Activated CD4-positive, alpha-beta T cell treated with anti-CD3 and anti-CD28 coated beads for 36 hours (primary cell): ENCODE measurements at regions of chr5 and their contacts with region 1.

Region 1: DNA sequence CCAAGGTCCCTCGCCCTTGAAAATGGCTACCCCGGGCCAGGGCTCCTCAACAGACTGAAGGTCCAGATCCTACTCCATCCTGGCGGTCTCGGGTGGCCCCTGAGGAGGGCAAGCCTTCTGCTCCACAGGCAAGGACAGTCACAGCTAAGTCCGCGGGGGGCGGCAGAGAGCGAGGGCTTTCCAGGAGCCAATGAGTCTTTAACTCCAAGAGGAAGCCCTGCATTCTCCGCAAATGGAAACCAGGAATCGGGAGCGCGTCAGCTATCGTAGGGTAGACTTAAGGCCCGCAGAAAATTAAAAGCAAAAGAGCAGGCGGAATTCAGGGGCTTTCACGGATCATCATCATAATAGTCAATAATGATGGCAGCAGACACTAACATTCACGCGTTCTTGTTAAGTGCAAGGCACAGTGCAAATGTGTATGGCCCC is 87.8 kb upstream of the TNFAIP8 start:
- DNase-seq: peak; percentile 93
- ATAC-seq: peak; percentile 75
- H3K4me3 Mint-ChIP-seq: peak overlapping the region; percentile 96
- H3K27ac Mint-ChIP-seq: peak overlapping the region; percentile 96
- H3K4me1 Mint-ChIP-seq: peaks cover 63% of the 10 kb centered on the region
- H3K27me3 Mint-ChIP-seq: no peaks in the 10 kb centered on the region

Region 2: GRCh38 chr5:119022017-119022745 is 245.8 kb before region 1 on chr5:
- CTCF ChIA-PET with region 1: interaction called, 4 read pairs
- POLR2A ChIA-PET with region 1: no interaction called
- intact Hi-C with region 1: loop called in 1 of 2 experiments (anchors 2 kb)
- DNase-seq: no peak
- ATAC-seq: peak; percentile 70
- H3K4me3 Mint-ChIP-seq: no peak overlapping the region
- H3K27ac Mint-ChIP-seq: no peak overlapping the region
- H3K4me1 Mint-ChIP-seq: peaks cover 2% of the 10 kb centered on the region
- H3K27me3 Mint-ChIP-seq: no peaks in the 10 kb centered on the region

Region 3: DNA sequence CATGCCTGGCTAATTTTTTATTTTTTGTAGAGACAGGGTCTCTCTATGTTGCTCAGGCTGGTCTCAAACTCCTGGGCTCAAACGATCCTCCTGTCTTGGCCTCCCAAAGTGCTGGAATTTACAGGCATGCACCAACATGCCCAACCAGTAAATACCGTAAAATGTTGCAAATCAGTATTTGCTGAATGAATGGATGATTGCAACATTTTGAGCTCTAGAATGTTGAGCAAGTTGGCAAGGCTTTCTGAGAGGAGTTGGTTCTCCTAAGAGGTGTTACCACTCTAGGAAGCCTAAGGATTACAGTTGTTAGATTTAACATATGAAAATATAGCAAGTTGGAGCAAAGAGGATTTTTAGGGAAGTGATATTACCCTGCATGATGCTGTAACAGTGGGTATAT is 212.7 kb before region 1 on chr5:
- CTCF ChIA-PET with region 1: no interaction called
- POLR2A ChIA-PET with region 1: no interaction called
- intact Hi-C with region 1: no loop called
- DNase-seq: no peak
- ATAC-seq: no peak
- H3K4me3 Mint-ChIP-seq: no peak overlapping the region
- H3K27ac Mint-ChIP-seq: no peak overlapping the region
- H3K4me1 Mint-ChIP-seq: no peaks in the 10 kb centered on the region
- H3K27me3 Mint-ChIP-seq: no peaks in the 10 kb centered on the region

Region 4: GRCh38 chr5:119255571-119256356 is 12.2 kb before region 1 on chr5:
- CTCF ChIA-PET with region 1: interaction called, 12 read pairs
- POLR2A ChIA-PET with region 1: interaction called, 4 read pairs
- intact Hi-C with region 1: no loop called
- DNase-seq: peak; percentile 22
- ATAC-seq: peak; percentile 56
- H3K4me3 Mint-ChIP-seq: no peak overlapping the region
- H3K27ac Mint-ChIP-seq: no peak overlapping the region
- H3K4me1 Mint-ChIP-seq: peaks cover 12% of the 10 kb centered on the region
- H3K27me3 Mint-ChIP-seq: no peaks in the 10 kb centered on the region

Region 5: GRCh38 chr5:119315516-119315949 is 47.6 kb after region 1 on chr5:
- CTCF ChIA-PET with region 1: interaction called, 13 read pairs
- POLR2A ChIA-PET with region 1: no interaction called
- intact Hi-C with region 1: no loop called
- DNase-seq: peak; percentile 78
- ATAC-seq: peak; percentile 77
- H3K4me3 Mint-ChIP-seq: peak overlapping the region; percentile 28
- H3K27ac Mint-ChIP-seq: peak overlapping the region; percentile 91
- H3K4me1 Mint-ChIP-seq: peaks cover 91% of the 10 kb centered on the region
- H3K27me3 Mint-ChIP-seq: no peaks in the 10 kb centered on the region

Region 6: DNA sequence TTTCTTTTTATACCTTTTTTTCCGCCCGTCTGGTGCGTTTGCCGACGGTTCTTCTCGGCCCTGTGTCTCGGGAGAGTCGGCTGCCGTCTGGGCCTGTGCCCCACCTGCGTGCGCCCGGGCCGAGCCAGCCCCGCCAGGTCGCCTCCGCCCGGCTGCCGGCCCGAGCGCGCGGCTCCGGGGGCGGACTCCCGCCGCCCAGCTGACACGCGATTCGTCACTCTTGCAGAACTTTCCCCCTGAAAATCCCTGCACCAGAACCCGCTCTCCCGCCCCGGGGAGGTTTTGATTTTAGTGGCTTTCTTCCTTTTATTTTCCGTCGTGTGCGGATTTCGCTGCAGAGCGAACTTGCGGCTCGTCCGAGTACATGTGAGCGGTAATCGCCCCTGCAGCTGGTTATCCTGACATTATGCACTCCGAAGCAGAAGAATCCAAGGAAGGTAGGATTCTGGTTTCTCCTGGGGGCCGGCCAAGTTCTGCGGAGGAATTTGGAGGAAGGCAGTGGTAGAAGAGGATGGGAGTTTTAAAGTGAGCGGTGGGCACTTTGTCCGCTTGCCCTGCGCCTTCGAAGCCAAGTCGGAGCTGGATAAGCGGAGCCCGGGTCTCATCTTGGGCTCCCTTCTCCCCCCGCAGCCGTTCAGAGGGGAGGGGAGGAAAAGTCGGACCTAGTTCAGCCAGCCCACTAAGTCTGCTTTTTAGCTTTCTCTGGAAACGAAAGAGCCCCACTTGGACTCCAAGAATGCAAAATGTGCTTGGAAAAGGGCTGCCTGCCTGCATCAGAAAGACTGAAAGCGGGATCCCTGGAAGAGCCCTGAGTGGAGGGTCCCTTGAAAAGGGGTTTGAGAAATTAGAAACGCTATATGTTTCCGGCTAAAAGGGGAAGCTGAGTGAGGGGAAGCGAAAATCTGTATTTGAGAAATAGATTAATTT is 88.0 kb after region 1 on chr5 and contains the start of gene TNFAIP8:
- CTCF ChIA-PET with region 1: interaction called, 4 read pairs
- POLR2A ChIA-PET with region 1: interaction called, 9 read pairs
- intact Hi-C with region 1: loop called in 1 of 2 experiments (anchors 2 kb)
- DNase-seq: peak; percentile 91
- ATAC-seq: peak; percentile 65
- H3K4me3 Mint-ChIP-seq: peak within 1 kb of the TSS; percentile 98
- H3K27ac Mint-ChIP-seq: peak within 1 kb of the TSS; percentile 99
- H3K4me1 Mint-ChIP-seq: peaks cover 62% of the 10 kb centered on the region
- H3K27me3 Mint-ChIP-seq: no peaks in the 10 kb centered on the region
- total RNA-seq, gene TNFAIP8: 166 to 171 TPM

Region 7: GRCh38 chr5:119537704-119538103 is 269.7 kb after region 1 on chr5:
- CTCF ChIA-PET with region 1: no interaction called
- POLR2A ChIA-PET with region 1: no interaction called
- intact Hi-C with region 1: no loop called
- DNase-seq: peak; percentile 16
- ATAC-seq: peak; percentile 58
- H3K4me3 Mint-ChIP-seq: no peak overlapping the region
- H3K27ac Mint-ChIP-seq: no peak overlapping the region
- H3K4me1 Mint-ChIP-seq: peaks cover 7% of the 10 kb centered on the region
- H3K27me3 Mint-ChIP-seq: no peaks in the 10 kb centered on the region